CD4-positive, alpha-beta T cell (primary cell): ENCODE measurements at regions of chr6 and their contacts with region 1.

Region 1: GRCh38 chr6:324116-325075 is 32.1 kb downstream of the DUSP22 start:
- DNase-seq: no peak
- ATAC-seq: no peak
- H3K4me3 ChIP-seq: no peak overlapping the region
- H3K4me3 Mint-ChIP-seq: no peak overlapping the region
- H3K27ac ChIP-seq: no peak overlapping the region
- H3K27ac Mint-ChIP-seq: no peak overlapping the region
- H3K4me1 ChIP-seq: peaks cover 7% of the 10 kb centered on the region
- H3K4me1 Mint-ChIP-seq: no peaks in the 10 kb centered on the region
- H3K27me3 ChIP-seq: no peaks in the 10 kb centered on the region
- H3K27me3 Mint-ChIP-seq: no peaks in the 10 kb centered on the region
- CTCF ChIP-seq: no peak

Region 2: GRCh38 chr6:300494-301198 is 23.8 kb before region 1 on chr6:
- CTCF ChIA-PET with region 1: no interaction called
- POLR2A ChIA-PET with region 1: no interaction called
- intact Hi-C with region 1: loop called in 1 of 2 experiments (anchors 1 kb)
- DNase-seq: no peak
- ATAC-seq: no peak
- H3K4me3 ChIP-seq: no peak overlapping the region
- H3K4me3 Mint-ChIP-seq: no peak overlapping the region
- H3K27ac ChIP-seq: no peak overlapping the region
- H3K27ac Mint-ChIP-seq: no peak overlapping the region
- H3K4me1 ChIP-seq: peaks cover 10% of the 10 kb centered on the region
- H3K4me1 Mint-ChIP-seq: no peaks in the 10 kb centered on the region
- H3K27me3 ChIP-seq: no peaks in the 10 kb centered on the region
- H3K27me3 Mint-ChIP-seq: no peaks in the 10 kb centered on the region
- CTCF ChIP-seq: no peak